Endothelial cell of umbilical vein (primary cell): ENCODE measurements at regions of chr10 and their contacts with region 1.

Region 1: GRCh38 chr10:30986053-30986555 is 45.6 kb downstream of the ZNF438 start:
- DNase-seq: peak; percentile 69
- H3K4me3 ChIP-seq: no peak overlapping the region
- H3K27ac ChIP-seq: peak overlapping the region; percentile 93
- H3K4me1 ChIP-seq: peaks cover 56% of the 10 kb centered on the region
- H3K27me3 ChIP-seq: no peaks in the 10 kb centered on the region
- CTCF ChIP-seq: no peak
- POLR2A ChIP-seq: no peak

Region 2: DNA sequence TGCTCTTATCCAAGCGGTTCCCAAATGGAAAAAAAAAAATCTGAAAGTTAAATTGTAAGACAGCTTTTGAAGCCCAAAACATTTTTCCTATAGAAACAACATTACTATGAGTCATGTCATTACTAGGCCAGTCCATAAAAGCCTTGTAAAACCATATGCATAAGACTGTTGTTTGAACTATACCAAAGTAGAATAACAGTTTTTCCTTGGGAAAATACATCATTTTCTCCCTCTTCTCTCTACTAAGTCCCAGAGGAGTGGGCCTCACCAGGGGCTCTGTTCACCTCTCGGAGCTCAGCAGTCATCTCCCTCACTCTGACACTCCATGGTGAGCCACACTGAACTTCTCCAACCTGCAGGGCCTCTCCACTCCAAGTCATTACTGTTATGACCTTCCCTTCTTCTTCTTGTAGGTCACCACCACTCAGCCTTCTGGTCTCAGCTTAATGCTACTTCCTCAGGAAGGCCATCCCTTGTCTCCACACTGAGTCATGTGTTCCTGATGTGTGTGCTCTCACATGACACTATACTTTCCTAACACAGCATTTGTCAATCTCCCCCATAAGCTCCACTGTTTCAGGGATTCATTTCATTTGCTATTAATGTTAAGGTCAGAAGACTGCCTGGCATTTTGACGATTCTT is 13.1 kb after region 1 on chr10:
- CTCF ChIA-PET with region 1: interaction called, 12 read pairs
- POLR2A ChIA-PET with region 1: interaction called, 9 read pairs
- dilution Hi-C with region 1: no loop called
- intact Hi-C with region 1: loop called (anchors 1 kb)
- DNase-seq: peak; percentile 85
- H3K4me3 ChIP-seq: peak overlapping the region in 2 of 3 experiments; percentile 29 to 76
- H3K27ac ChIP-seq: peak overlapping the region; percentile 99
- H3K4me1 ChIP-seq: peaks cover 72% of the 10 kb centered on the region
- H3K27me3 ChIP-seq: no peaks in the 10 kb centered on the region
- CTCF ChIP-seq: no peak
- POLR2A ChIP-seq: peak; percentile 80

Region 3: DNA sequence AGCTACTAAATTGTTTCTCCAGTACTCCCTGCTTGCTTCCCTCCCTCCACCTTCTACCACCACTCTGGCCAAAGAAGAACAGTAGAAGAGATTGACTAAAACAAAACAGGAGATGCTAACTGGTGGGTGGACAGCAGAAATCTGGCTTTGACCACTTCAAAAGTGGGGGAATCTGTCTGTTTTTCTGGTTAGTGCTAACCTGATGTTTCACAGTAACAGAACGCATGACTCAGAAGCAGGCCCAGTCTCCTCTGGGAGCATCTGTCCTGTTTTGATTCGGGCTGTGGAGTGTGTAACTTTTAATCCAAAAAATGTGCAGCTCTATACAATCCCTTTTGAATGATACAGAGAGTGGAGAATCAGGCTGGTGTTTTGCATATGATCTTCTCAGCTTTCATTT is 78.2 kb after region 1 on chr10:
- CTCF ChIA-PET with region 1: no interaction called
- POLR2A ChIA-PET with region 1: no interaction called
- dilution Hi-C with region 1: no loop called
- intact Hi-C with region 1: no loop called
- DNase-seq: no peak
- H3K4me3 ChIP-seq: no peak overlapping the region
- H3K27ac ChIP-seq: no peak overlapping the region
- H3K4me1 ChIP-seq: peaks cover 13% of the 10 kb centered on the region
- H3K27me3 ChIP-seq: no peaks in the 10 kb centered on the region
- CTCF ChIP-seq: no peak
- POLR2A ChIP-seq: no peak